ENCODE measurements at regions of chr10 and their contacts with region 1.

Region 1: DNA sequence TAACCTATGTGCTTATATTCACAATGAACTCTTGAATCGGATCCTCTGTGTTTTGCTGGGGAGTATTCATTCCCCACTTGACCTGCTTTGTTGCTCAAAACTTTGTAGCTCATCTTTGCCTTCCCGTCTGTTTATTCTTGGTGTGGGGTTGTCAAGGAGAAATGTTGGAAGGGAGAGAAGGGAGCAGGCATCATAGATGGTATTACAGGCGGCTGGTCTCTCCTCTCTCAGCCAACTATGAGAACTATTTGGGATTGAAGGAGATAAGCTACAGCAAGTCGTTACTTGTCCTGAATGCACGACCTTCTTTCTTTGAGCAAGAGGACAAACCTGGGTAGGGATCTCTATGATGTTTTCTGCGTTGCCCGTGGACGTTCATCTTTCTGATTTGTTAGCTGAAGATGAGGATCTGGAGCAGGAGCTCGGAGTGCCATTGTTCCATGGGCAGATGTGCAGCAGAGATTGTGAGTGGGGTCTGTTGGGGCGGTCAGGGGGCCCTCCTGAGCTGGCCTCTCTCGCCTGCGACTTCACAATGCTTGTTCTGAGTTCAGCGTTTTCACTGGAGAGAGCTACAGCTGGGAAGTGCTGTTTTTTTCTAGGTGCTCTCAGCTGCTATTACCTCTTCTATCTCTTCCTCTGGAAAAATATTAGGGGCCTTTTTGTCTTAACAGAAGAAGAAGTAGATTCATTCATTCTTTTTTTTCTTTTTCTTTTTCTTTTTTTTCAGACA is 126.9 kb upstream of the KLF6 start:
- DNase-seq: no peak
- ATAC-seq: peak; percentile 68 to 89 (median 82)
- H3K4me3 ChIP-seq: peak overlapping the region in 9 of 10 donors; percentile 19 to 57 (median 48)
- H3K27ac ChIP-seq: peak overlapping the region; percentile 57 to 90 (median 84)
- H3K4me1 ChIP-seq: peaks cover 0 to 17% (median 7%) of the 10 kb centered on the region in 9 donors
- H3K27me3 ChIP-seq: no peaks in the 10 kb centered on the region
- CTCF ChIP-seq: no peak

Region 2: GRCh38 chr10:3811291-3811870 is 100.5 kb before region 1 on chr10:
- intact Hi-C with region 1: loop called in 3 of 10 experiments (anchors 5 to 10 kb)
- DNase-seq: peak in 1 of 2 donors; percentile 54
- ATAC-seq: peak; percentile 20 to 71 (median 66)
- H3K4me3 ChIP-seq: peak overlapping the region in 6 of 10 donors; percentile 4 to 30 (median 22)
- H3K27ac ChIP-seq: peak overlapping the region; percentile 49 to 95 (median 89)
- H3K4me1 ChIP-seq: peaks cover 19 to 75% (median 57%) of the 10 kb centered on the region in 9 donors
- H3K27me3 ChIP-seq: no peaks in the 10 kb centered on the region
- CTCF ChIP-seq: no peak

Region 3: GRCh38 chr10:3961082-3961481 is 49.2 kb after region 1 on chr10:
- intact Hi-C with region 1: no loop called
- DNase-seq: no peak
- ATAC-seq: peak in 3 of 8 donors; percentile 15 to 58 (median 31)
- H3K4me3 ChIP-seq: no peak overlapping the region
- H3K27ac ChIP-seq: no peak overlapping the region
- H3K4me1 ChIP-seq: peaks cover 0 to 10% (median 0%) of the 10 kb centered on the region in 9 donors
- H3K27me3 ChIP-seq: no peaks in the 10 kb centered on the region
- CTCF ChIP-seq: no peak

Region 4: DNA sequence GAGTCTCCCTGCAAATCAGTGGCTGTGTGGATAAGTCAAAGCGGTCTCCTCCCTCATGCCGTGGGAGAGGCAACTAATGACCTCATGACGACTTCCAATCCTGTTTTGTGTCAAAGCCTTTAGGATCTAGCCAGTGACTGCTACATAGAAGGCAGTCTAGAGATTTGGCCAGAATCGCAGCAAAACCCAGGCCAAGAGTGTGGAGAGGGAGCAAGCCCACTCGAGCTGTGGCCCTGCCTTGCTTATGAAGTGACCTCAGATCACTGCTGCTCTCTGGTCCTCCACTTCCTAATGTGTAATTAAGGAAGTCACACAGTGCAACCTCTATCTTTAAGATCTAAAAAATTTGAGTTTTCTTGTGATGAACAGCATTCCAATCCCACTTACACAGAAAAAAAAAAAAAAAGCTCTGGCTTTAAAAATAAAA is 169.8 kb after region 1 on chr10:
- intact Hi-C with region 1: loop called in 1 of 10 experiments (anchors 10 kb)
- DNase-seq: peak in 1 of 2 donors; percentile 43
- ATAC-seq: peak in 7 of 8 donors; percentile 29 to 75 (median 64)
- H3K4me3 ChIP-seq: no peak overlapping the region
- H3K27ac ChIP-seq: peak overlapping the region in 8 of 10 donors; percentile 47 to 87 (median 64)
- H3K4me1 ChIP-seq: peaks cover 4 to 62% (median 51%) of the 10 kb centered on the region in 9 donors
- H3K27me3 ChIP-seq: no peaks in the 10 kb centered on the region
- CTCF ChIP-seq: no peak